ENCODE measurements at regions of chr2 and their contacts with region 1.

Region 1: DNA sequence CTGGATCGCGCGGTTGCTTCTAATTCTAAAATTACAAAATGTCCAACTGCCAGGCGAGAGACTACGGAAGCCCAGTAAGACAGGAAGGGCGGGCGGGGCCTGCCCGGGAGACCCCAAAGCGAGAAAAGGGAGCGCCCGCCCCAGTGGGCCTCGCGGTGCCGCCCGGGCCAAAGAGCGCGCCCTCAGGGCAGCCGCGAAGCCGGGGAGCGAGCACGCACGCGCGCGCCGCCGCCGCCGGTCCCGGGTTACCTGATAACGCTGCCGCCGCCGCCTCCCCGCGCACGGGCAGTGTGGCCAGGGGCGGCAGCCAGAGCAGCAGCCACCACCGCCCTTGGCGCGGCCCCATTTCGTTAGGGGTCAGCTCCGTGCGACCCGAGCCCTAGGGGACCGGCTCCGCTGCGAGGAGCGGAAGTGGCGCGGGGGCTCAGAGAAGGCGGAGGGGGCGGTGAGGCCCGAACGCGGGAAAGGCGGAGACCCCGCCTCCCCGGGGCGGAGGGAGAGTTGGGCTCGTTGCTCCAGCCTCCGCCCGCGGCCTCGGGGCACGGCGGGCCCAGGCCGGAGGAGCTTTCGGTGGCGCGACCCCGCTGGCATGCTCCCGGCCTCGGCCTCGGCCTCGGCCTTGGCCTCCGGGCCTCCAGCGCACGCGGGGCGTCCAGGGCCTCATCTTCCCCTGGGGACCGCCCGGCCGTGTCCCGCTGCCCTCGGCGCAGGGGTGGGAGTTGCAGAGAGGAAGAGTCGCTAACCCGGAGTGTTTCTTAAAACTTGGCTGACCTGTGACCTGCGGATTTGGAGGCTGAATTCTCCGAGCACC is at the start of gene NEMP2:
- DNase-seq: peak; percentile 72 to 88 (median 78)
- ATAC-seq: peak; percentile 83
- H3K4me3 ChIP-seq: peak within 1 kb of the TSS; percentile 73
- H3K4me3 Mint-ChIP-seq: peak within 1 kb of the TSS; percentile 91 to 99 (median 97)
- H3K27ac ChIP-seq: peak within 1 kb of the TSS; percentile 96
- H3K27ac Mint-ChIP-seq: peak within 1 kb of the TSS; percentile 99 to 100 (median 100)
- H3K4me1 ChIP-seq: peaks cover 20 to 36% of the 10 kb centered on the region in 2 donors
- H3K4me1 Mint-ChIP-seq: peaks cover 19 to 63% (median 60%) of the 10 kb centered on the region in 7 donors
- H3K27me3 ChIP-seq: no peaks in the 10 kb centered on the region
- H3K27me3 Mint-ChIP-seq: no peaks in the 10 kb centered on the region
- total RNA-seq, gene NEMP2: 11.1 to 30.8 (median 18.4) TPM

Region 2: GRCh38 chr2:189440947-189441708 is 1093.4 kb before region 1 on chr2 and contains the start of gene WDR75:
- CTCF ChIA-PET with region 1: no interaction called
- POLR2A ChIA-PET with region 1: no interaction called
- intact Hi-C with region 1: loop called in 1 of 2 experiments (anchors 1 kb)
- DNase-seq: peak; percentile 73 to 96 (median 94)
- ATAC-seq: peak; percentile 97
- H3K4me3 ChIP-seq: peak within 1 kb of the TSS; percentile 83
- H3K4me3 Mint-ChIP-seq: peak within 1 kb of the TSS in 6 of 10 donors; percentile 99 to 100 (median 100)
- H3K27ac ChIP-seq: peak within 1 kb of the TSS; percentile 92
- H3K27ac Mint-ChIP-seq: peak within 1 kb of the TSS in 8 of 9 donors; percentile 97 to 100 (median 100)
- H3K4me1 ChIP-seq: peaks cover 10 to 14% of the 10 kb centered on the region in 2 donors
- H3K4me1 Mint-ChIP-seq: peaks cover 3 to 13% (median 8%) of the 10 kb centered on the region in 7 donors
- H3K27me3 ChIP-seq: no peaks in the 10 kb centered on the region
- H3K27me3 Mint-ChIP-seq: peaks cover 0 to 10% (median 0%) of the 10 kb centered on the region in 5 donors
- total RNA-seq, gene WDR75: 39.9 to 67.4 (median 60.7) TPM

Region 3: GRCh38 chr2:189783927-189784867 is 750.3 kb before region 1 on chr2 and contains the starts of genes ORMDL1 and PMS1:
- CTCF ChIA-PET with region 1: no interaction called
- POLR2A ChIA-PET with region 1: no interaction called
- intact Hi-C with region 1: loop called (anchors 1 to 2 kb)
- DNase-seq: peak; percentile 90 to 96 (median 94)
- ATAC-seq: peak; percentile 95
- H3K4me3 ChIP-seq: peak within 1 kb of the TSS; percentile 76
- H3K4me3 Mint-ChIP-seq: peak within 1 kb of the TSS; percentile 86 to 97 (median 94)
- H3K27ac ChIP-seq: peak within 1 kb of the TSS; percentile 92
- H3K27ac Mint-ChIP-seq: peak within 1 kb of the TSS; percentile 89 to 97 (median 95)
- H3K4me1 ChIP-seq: peaks cover 21 to 24% of the 10 kb centered on the region in 2 donors
- H3K4me1 Mint-ChIP-seq: peaks cover 26 to 72% (median 57%) of the 10 kb centered on the region in 7 donors
- H3K27me3 ChIP-seq: no peaks in the 10 kb centered on the region
- H3K27me3 Mint-ChIP-seq: no peaks in the 10 kb centered on the region
- total RNA-seq, gene ORMDL1: 80.1 to 208 (median 142) TPM
- total RNA-seq, gene PMS1: 18.2 to 30.1 (median 22.5) TPM

Region 4: DNA sequence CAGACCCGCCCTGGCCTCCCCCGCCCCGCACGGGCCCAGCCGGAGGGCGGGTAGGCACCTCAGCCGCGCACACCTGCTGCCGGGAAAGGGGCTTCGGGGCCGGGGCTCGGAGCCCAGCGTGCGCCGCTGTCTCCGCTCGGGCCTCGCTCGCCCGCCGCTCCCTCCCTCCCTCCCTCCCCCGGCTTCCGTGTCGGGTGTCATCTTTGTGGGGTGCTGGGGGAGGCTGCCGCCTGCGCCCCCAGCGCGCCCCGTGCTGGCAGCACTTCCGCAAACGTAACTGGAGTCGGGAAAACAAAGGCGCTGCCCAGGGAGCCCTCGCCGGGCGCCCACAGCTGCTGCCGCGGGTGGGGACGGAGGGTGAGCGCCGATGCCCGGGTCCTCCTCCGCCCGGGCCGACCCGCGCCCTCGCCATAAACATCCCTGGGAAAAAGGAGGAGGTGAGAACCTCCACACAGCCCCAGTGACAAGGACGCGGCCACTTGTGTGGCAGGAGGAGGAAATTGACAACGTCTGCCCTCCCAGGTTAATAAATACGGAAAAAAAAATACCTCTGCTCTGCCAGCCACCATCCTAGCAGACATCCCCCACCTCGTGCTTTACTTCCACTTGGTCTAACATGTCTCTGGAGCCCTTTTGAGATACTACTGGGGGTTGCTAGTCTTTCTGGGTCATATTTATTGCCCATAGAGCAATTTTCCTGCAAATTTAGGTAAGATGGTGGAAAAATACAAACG is 125.8 kb before region 1 on chr2:
- CTCF ChIA-PET with region 1: interaction called, 5 read pairs
- POLR2A ChIA-PET with region 1: interaction called, 50 read pairs
- intact Hi-C with region 1: loop called (anchors 1 kb)
- DNase-seq: peak in 8 of 9 donors; percentile 69 to 86 (median 82)
- ATAC-seq: peak; percentile 68
- H3K4me3 ChIP-seq: peak overlapping the region; percentile 76
- H3K4me3 Mint-ChIP-seq: peak overlapping the region; percentile 87 to 95 (median 92)
- H3K27ac ChIP-seq: peak overlapping the region; percentile 100
- H3K27ac Mint-ChIP-seq: peak overlapping the region; percentile 94 to 98 (median 98)
- H3K4me1 ChIP-seq: peaks cover 28 to 41% of the 10 kb centered on the region in 2 donors
- H3K4me1 Mint-ChIP-seq: peaks cover 29 to 52% (median 45%) of the 10 kb centered on the region in 7 donors
- H3K27me3 ChIP-seq: no peaks in the 10 kb centered on the region
- H3K27me3 Mint-ChIP-seq: no peaks in the 10 kb centered on the region

Region 5: DNA sequence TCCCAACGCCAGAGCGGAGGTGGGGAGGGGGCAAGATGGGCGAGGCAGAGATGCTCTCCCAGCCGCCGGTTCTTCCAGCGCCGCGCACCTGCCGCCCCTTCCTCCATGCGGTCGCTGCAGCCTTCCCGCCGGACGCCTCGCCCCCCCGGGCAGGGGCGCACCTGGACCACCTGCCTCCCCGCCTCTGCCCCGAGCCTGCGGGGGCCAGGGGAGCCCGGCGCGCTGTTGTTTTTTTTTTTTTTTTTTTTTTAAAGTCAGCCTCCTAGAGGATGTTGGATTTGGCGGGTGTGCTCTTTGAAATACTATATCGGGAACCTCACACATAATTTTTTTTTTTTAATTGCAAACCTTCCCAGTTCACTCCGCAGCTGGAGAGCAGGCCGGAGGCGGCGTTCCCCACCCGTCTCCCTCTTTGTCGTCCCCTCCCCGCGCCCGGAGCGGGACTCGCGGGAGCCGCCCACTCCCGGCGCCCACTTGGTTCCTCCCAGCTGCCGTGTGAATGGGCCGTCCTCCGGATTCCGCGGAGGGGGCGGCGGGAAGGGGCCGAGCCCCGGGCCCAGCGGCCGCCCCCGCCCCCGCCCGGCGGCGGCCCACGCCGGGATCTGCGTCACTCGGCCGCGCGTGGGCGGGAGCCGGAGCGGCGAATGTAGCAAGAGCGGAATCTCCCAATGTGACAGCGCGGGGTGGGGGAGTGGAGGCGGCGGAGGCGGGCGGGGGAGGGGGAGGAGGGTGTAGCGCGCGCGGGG is 113.9 kb after region 1 on chr2:
- CTCF ChIA-PET with region 1: interaction called, 3 read pairs
- POLR2A ChIA-PET with region 1: interaction called, 14 read pairs
- intact Hi-C with region 1: loop called (anchors 1 kb)
- DNase-seq: peak; percentile 83 to 93 (median 89)
- ATAC-seq: peak; percentile 91
- H3K4me3 ChIP-seq: peak overlapping the region; percentile 62
- H3K4me3 Mint-ChIP-seq: peak overlapping the region; percentile 76 to 92 (median 88)
- H3K27ac ChIP-seq: peak overlapping the region; percentile 92
- H3K27ac Mint-ChIP-seq: peak overlapping the region; percentile 15 to 98 (median 90)
- H3K4me1 ChIP-seq: peaks cover 10 to 16% of the 10 kb centered on the region in 2 donors
- H3K4me1 Mint-ChIP-seq: peaks cover 10 to 54% (median 47%) of the 10 kb centered on the region in 7 donors
- H3K27me3 ChIP-seq: no peaks in the 10 kb centered on the region
- H3K27me3 Mint-ChIP-seq: no peaks in the 10 kb centered on the region

Region 6: GRCh38 chr2:191020221-191020741 is 485.8 kb after region 1 on chr2:
- CTCF ChIA-PET with region 1: no interaction called
- POLR2A ChIA-PET with region 1: interaction called, 3 read pairs
- intact Hi-C with region 1: loop called in 1 of 2 experiments (anchors 1 kb)
- DNase-seq: peak; percentile 89 to 99 (median 94)
- ATAC-seq: peak; percentile 88
- H3K4me3 ChIP-seq: peak overlapping the region; percentile 78
- H3K4me3 Mint-ChIP-seq: no peak overlapping the region
- H3K27ac ChIP-seq: peak overlapping the region; percentile 82
- H3K27ac Mint-ChIP-seq: no peak overlapping the region
- H3K4me1 ChIP-seq: peaks cover 44 to 48% of the 10 kb centered on the region in 2 donors
- H3K4me1 Mint-ChIP-seq: peaks cover 11 to 46% (median 32%) of the 10 kb centered on the region in 7 donors
- H3K27me3 ChIP-seq: no peaks in the 10 kb centered on the region
- H3K27me3 Mint-ChIP-seq: peaks cover 0 to 2% (median 0%) of the 10 kb centered on the region in 5 donors

Region 7: GRCh38 chr2:191474464-191474863 is 939.9 kb after region 1 on chr2:
- CTCF ChIA-PET with region 1: no interaction called
- POLR2A ChIA-PET with region 1: no interaction called
- intact Hi-C with region 1: no loop called
- DNase-seq: no peak
- ATAC-seq: no peak
- H3K4me3 ChIP-seq: no peak overlapping the region
- H3K4me3 Mint-ChIP-seq: no peak overlapping the region
- H3K27ac ChIP-seq: no peak overlapping the region
- H3K27ac Mint-ChIP-seq: no peak overlapping the region
- H3K4me1 ChIP-seq: no peaks in the 10 kb centered on the region
- H3K4me1 Mint-ChIP-seq: no peaks in the 10 kb centered on the region
- H3K27me3 ChIP-seq: no peaks in the 10 kb centered on the region
- H3K27me3 Mint-ChIP-seq: no peaks in the 10 kb centered on the region